Endothelial cell of umbilical vein (primary cell): ENCODE measurements at regions of chr1 and their contacts with region 1.

Region 1: DNA sequence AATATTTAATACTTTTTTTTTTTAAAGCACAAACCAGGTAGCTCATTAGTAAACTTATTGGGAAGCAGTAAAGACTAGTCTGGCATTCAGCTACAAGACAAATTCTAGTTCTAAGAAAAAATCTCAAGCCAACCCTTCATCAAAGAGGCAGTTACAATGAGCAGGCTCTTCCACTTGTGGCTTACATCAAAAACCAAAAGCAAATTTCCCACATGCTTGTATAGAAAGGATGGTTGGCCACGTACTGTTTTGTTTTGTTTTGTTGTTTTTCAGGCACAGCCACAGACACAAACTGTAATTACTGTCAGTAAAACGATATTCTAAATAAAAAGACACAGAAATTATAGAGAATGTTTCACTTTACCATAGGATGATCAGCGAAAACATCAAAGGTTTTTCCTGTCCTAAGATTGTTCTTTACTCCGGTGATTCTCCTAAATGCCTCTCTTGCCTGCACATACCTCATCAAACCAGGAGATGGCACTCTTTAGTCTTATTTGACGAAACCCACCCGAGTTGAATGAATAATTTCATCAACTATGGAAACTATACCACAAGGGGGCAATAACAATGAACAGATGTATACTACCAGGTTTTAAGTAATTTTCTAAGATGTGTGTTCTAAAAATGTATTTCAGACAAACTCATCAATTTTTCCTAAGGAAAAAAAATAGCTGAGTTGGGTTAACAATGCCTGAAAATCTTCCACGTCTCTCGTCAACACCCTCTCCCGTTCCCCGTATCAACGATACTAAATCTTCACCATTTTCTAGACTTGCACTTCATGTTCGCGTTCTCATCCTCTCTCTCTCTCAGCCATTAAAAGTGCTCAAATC is 26.9 kb downstream of the RPL5 start:
- DNase-seq: peak; percentile 81
- H3K4me3 ChIP-seq: no peak overlapping the region
- H3K27ac ChIP-seq: no peak overlapping the region
- H3K4me1 ChIP-seq: no peaks in the 10 kb centered on the region
- H3K27me3 ChIP-seq: peaks cover 2 to 6% of the 10 kb centered on the region in 2 experiments
- CTCF ChIP-seq: peak; percentile 66 to 93
- POLR2A ChIP-seq: no peak

Region 2: GRCh38 chr1:92653617-92654381 is 205.0 kb before region 1 on chr1:
- CTCF ChIA-PET with region 1: no interaction called
- POLR2A ChIA-PET with region 1: no interaction called
- dilution Hi-C with region 1: no loop called
- intact Hi-C with region 1: no loop called
- DNase-seq: no peak
- H3K4me3 ChIP-seq: no peak overlapping the region
- H3K27ac ChIP-seq: no peak overlapping the region
- H3K4me1 ChIP-seq: no peaks in the 10 kb centered on the region
- H3K27me3 ChIP-seq: no peaks in the 10 kb centered on the region
- CTCF ChIP-seq: no peak
- POLR2A ChIP-seq: no peak

Region 3: GRCh38 chr1:92736395-92736794 is 122.4 kb before region 1 on chr1:
- CTCF ChIA-PET with region 1: no interaction called
- POLR2A ChIA-PET with region 1: no interaction called
- dilution Hi-C with region 1: no loop called
- intact Hi-C with region 1: no loop called
- DNase-seq: peak; percentile 23
- H3K4me3 ChIP-seq: no peak overlapping the region
- H3K27ac ChIP-seq: no peak overlapping the region
- H3K4me1 ChIP-seq: no peaks in the 10 kb centered on the region
- H3K27me3 ChIP-seq: no peaks in the 10 kb centered on the region
- CTCF ChIP-seq: peak in 1 of 2 donors; percentile 17
- POLR2A ChIP-seq: no peak

Region 4: DNA sequence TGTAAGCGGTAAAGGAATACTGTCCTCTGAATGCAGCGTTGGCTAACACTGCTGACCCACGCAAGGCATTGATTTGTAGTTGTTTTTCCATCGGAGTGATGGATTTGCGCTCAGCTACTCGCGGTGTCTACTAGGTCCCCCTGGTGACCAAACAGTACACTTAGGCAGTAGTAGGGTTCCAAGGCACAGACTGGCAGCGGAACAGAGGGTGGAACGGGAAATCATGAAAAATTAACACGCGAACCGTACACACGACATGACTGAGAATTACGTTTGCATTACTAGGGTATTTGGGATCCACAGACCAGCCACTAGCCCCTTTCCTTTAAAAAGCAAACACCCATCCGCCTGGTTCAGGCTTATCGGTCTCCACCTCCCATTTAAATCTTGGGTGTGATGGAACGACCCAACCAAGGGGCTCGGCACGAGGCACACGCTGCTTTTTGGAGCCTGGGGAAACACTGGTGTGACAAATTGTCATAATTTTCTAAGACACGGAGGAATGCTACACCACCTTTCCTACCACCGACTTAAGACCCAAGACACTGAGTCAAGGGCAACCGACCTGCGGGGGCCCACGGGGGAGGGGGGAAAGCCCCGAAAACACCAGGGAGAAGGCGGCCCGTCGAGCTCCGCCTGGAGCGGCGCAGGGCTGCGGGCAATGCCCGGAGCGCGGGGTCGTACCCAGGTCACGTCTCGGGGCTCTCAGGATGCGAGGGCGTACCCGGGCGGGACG is 101.8 kb after region 1 on chr1:
- CTCF ChIA-PET with region 1: interaction called, 37 read pairs
- POLR2A ChIA-PET with region 1: no interaction called
- dilution Hi-C with region 1: no loop called
- intact Hi-C with region 1: loop called (anchors 1 kb)
- DNase-seq: peak; percentile 75
- H3K4me3 ChIP-seq: peak overlapping the region; percentile 33 to 81 (median 58)
- H3K27ac ChIP-seq: no peak overlapping the region
- H3K4me1 ChIP-seq: peaks cover 9% of the 10 kb centered on the region
- H3K27me3 ChIP-seq: peaks cover 39 to 51% of the 10 kb centered on the region in 2 experiments
- CTCF ChIP-seq: peak; percentile 39 to 63
- POLR2A ChIP-seq: no peak

Region 5: DNA sequence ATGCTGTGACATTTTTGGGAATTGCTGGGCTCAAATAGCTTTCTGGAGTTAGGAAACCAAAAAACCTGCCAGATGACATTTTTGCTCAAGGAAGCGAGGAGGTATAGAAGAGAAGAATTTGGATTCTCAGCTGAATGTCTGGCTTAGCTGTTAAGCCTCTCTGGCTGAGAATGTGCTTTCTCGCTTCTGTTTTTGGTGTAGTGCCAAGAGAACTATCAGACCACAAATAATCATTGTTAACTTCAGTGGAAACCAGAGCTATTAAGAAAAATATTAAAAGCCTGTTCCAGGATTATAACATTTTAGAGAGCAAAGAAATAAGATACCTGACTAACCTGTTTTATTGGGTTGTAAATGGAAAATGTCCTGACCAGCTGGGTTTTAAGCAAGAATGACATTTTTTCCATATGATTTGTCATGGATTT is 142.0 kb after region 1 on chr1:
- CTCF ChIA-PET with region 1: interaction called, 11 read pairs
- POLR2A ChIA-PET with region 1: no interaction called
- dilution Hi-C with region 1: no loop called
- intact Hi-C with region 1: no loop called
- DNase-seq: no peak
- H3K4me3 ChIP-seq: no peak overlapping the region
- H3K27ac ChIP-seq: no peak overlapping the region
- H3K4me1 ChIP-seq: no peaks in the 10 kb centered on the region
- H3K27me3 ChIP-seq: peaks cover 20 to 24% of the 10 kb centered on the region in 2 experiments
- CTCF ChIP-seq: no peak
- POLR2A ChIP-seq: no peak

Region 6: GRCh38 chr1:93061895-93062792 is 203.4 kb after region 1 on chr1:
- CTCF ChIA-PET with region 1: interaction called, 12 read pairs
- POLR2A ChIA-PET with region 1: no interaction called
- dilution Hi-C with region 1: no loop called
- intact Hi-C with region 1: loop called (anchors 1 kb)
- DNase-seq: peak; percentile 29
- H3K4me3 ChIP-seq: no peak overlapping the region
- H3K27ac ChIP-seq: no peak overlapping the region
- H3K4me1 ChIP-seq: no peaks in the 10 kb centered on the region
- H3K27me3 ChIP-seq: peaks cover 4 to 14% of the 10 kb centered on the region in 2 experiments
- CTCF ChIP-seq: peak; percentile 39 to 42
- POLR2A ChIP-seq: no peak

Region 7: DNA sequence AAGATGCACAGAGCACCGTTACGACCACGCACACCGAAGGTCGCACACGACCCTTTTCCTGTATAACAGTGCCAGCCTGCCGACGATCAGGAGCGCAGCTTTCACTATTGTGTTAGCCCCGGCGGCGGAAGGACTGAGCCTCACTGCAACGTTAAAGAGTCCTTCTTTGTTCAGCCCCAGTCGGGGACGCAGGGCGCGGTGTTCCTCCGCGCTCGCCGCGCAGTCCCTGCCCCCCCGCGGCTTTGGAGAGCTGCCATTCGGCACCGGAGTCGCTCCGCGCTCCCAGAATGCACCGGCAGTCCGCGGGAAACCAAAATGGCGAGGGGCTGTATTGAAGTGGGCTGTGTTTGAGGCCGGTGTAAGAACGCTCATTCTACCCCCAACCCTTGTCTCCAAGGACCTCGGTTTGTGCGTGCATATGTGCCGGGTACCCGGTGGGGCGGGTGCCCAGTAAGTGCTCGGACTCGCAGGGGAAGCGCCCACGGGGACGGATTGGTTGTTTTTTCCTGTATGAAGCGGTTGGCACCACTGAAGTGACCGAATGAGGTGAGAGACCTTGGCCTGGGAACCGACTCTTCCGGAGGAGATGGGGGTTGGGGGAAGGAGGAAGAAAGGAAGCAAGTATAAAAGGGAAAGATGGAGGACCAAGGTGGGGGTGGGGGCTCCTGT is 220.3 kb after region 1 on chr1 and contains the start of gene MTF2:
- CTCF ChIA-PET with region 1: no interaction called
- POLR2A ChIA-PET with region 1: no interaction called
- dilution Hi-C with region 1: no loop called
- intact Hi-C with region 1: loop called (anchors 1 kb)
- DNase-seq: peak; percentile 97
- H3K4me3 ChIP-seq: peak within 1 kb of the TSS; percentile 81 to 90 (median 89)
- H3K27ac ChIP-seq: peak within 1 kb of the TSS; percentile 87
- H3K4me1 ChIP-seq: peaks cover 23% of the 10 kb centered on the region
- H3K27me3 ChIP-seq: no peaks in the 10 kb centered on the region
- CTCF ChIP-seq: no peak
- POLR2A ChIP-seq: peak; percentile 98
- total RNA-seq, gene MTF2: 40.5 and 42.6 TPM in 2 replicates

Region 8: DNA sequence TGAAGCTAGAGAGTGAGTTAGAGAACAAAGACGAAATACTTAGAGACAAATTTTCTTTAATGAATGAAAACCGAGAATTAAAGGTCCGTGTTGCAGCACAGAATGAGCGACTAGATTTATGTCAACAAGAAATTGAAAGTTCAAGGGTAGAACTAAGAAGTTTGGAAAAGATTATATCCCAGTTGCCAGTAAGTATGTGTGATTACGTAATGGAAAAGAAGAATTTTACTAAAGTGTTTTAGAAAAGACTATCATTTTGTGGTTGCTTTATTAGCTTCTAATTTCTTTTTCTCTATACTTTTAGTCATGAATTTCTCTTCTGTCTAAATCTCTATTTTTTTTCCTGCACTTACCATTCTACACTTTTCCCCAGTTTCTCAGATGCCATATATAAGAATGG is 348.4 kb after region 1 on chr1:
- CTCF ChIA-PET with region 1: no interaction called
- POLR2A ChIA-PET with region 1: no interaction called
- dilution Hi-C with region 1: no loop called
- intact Hi-C with region 1: no loop called
- DNase-seq: no peak
- H3K4me3 ChIP-seq: no peak overlapping the region
- H3K27ac ChIP-seq: no peak overlapping the region
- H3K4me1 ChIP-seq: no peaks in the 10 kb centered on the region
- H3K27me3 ChIP-seq: no peaks in the 10 kb centered on the region
- CTCF ChIP-seq: no peak
- POLR2A ChIP-seq: no peak

Region 9: GRCh38 chr1:93779540-93780192 is 920.9 kb after region 1 on chr1:
- CTCF ChIA-PET with region 1: no interaction called
- POLR2A ChIA-PET with region 1: no interaction called
- dilution Hi-C with region 1: no loop called
- intact Hi-C with region 1: no loop called
- DNase-seq: peak; percentile 84
- H3K4me3 ChIP-seq: no peak overlapping the region
- H3K27ac ChIP-seq: peak overlapping the region; percentile 93
- H3K4me1 ChIP-seq: peaks cover 17% of the 10 kb centered on the region
- H3K27me3 ChIP-seq: no peaks in the 10 kb centered on the region
- CTCF ChIP-seq: peak in 1 of 2 donors; percentile 19
- POLR2A ChIP-seq: no peak